IMR-90 (cell line): ENCODE measurements at regions of chr2 and their contacts with region 1.

Region 1: GRCh38 chr2:21754164-21754788 is 630.5 kb downstream of the TDRD15 start:
- DNase-seq: no peak
- ATAC-seq: no peak
- H3K4me3 ChIP-seq: no peak overlapping the region
- H3K27ac ChIP-seq: no peak overlapping the region
- H3K4me1 ChIP-seq: no peaks in the 10 kb centered on the region
- H3K27me3 ChIP-seq: no peaks in the 10 kb centered on the region
- CTCF ChIP-seq: peak; percentile 31; the same call in 1 of the 2 replicates
- POLR2A ChIP-seq: no peak
- RAD21 ChIP-seq: peak; percentile 43; the same call in 1 of the 2 replicates

Region 2: DNA sequence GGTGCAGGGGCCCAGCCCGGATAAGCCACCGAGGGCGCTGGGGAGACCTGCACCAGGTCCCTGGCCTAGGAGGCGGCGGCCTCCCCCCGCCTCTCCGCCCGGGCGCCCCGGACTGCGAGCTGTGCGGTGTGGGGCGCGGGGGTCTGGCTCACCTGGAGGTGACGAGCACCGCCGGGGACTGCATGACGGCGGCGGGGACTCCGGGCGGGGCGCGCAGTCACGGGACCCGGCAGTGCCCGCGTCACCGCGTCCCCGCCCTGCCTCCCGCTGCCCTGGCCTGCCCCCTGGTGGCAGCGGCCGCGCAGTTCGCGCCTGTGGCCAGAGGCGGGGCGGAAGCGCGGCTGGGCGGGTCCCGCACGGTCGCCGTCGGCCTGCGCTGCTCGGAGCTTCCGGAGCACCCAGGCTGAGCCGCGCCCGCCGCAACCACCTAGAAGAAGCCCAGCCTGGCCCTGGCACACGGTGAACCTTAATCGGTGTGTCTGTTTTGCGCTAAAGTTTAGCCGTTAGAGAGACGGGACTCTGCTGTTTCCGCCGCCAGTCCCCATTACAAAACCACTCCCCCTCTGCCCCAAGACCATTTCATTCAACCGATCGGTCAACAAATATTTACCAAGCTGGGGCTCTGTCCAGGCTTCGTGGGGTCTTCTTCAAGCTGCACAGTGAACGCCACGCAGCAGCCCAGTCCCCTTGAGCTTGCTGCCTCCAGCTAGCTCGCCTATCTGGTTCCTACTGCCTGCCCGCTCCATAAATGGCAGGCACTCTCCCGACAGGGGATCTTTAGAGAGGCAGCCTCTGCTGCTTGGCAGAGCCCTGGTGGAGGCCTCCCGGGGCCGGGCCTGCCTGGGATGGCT is 1103.2 kb before region 1 on chr2 and contains the start of gene HS1BP3:
- CTCF ChIA-PET with region 1: no interaction called
- POLR2A ChIA-PET with region 1: no interaction called
- dilution Hi-C with region 1: no loop called
- in situ Hi-C with region 1: loop called (anchors 25 kb)
- intact Hi-C with region 1: no loop called
- DNase-seq: peak; percentile 65
- ATAC-seq: peak; percentile 99
- H3K4me3 ChIP-seq: peak within 1 kb of the TSS; percentile 91
- H3K27ac ChIP-seq: peak within 1 kb of the TSS; percentile 79
- H3K4me1 ChIP-seq: peaks cover 9% of the 10 kb centered on the region
- H3K27me3 ChIP-seq: peaks cover 14% of the 10 kb centered on the region
- CTCF ChIP-seq: peak; percentile 99
- POLR2A ChIP-seq: peak; percentile 70
- RAD21 ChIP-seq: peak; percentile 49
- total RNA-seq, gene HS1BP3: 9.0 and 10.3 TPM in 2 replicates

Region 3: DNA sequence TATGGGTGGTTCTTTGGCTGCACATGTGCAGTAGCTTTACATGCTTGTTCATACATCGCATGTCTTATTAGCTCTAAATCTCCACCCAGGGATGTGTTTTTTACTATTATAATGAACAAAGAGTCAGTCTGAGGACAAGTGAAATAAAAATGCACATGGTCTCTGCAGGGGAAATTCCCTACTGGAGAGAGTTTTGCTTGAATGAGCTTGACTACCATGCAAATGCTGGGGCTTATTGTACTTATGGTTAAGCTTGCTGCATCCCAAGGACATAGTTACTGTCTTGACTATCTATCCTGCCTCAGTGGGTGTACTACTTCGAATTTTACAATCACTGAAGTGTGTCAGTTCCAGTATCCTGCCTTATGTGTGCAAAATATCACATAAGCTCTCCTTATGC is 267.8 kb before region 1 on chr2:
- CTCF ChIA-PET with region 1: no interaction called
- POLR2A ChIA-PET with region 1: no interaction called
- dilution Hi-C with region 1: no loop called
- in situ Hi-C with region 1: no loop called
- intact Hi-C with region 1: no loop called
- DNase-seq: no peak
- ATAC-seq: no peak
- H3K4me3 ChIP-seq: no peak overlapping the region
- H3K27ac ChIP-seq: no peak overlapping the region
- H3K4me1 ChIP-seq: no peaks in the 10 kb centered on the region
- H3K27me3 ChIP-seq: no peaks in the 10 kb centered on the region
- CTCF ChIP-seq: no peak
- POLR2A ChIP-seq: no peak
- RAD21 ChIP-seq: no peak